ENCODE measurements at regions of chr1 and their contacts with region 1.

Region 1: GRCh38 chr1:214439352-214440119 is 111.9 kb downstream of the PTPN14 start:
- DNase-seq: peak; percentile 58 to 99
- H3K4me3 ChIP-seq: peak overlapping the region; percentile 37; the same call in 1 of the 2 replicates
- H3K27ac ChIP-seq: peak overlapping the region; percentile 80
- H3K4me1 ChIP-seq: peaks cover 38% of the 10 kb centered on the region
- H3K27me3 ChIP-seq: no peaks in the 10 kb centered on the region
- CTCF ChIP-seq: no peak

Region 2: DNA sequence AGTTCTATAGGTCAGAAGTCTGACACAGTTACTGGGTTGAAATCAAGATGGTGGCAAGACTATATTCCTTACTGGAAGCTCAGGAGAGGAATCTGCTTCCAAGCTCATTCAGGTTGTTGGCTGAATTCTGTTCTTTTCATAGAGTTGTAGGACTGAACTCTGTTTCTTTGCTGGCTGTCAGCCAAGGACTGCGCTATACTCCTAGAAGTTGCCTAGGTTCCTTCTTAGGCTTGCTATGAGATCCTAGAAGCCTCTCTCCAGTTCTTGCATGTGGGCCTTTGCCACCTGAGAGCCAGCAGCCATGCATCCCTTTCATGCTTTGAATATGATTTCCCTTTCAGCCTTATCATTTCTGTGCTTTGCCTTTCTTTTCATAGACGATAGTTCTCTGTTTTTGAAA is 1212.1 kb before region 1 on chr1:
- CTCF ChIA-PET with region 1: no interaction called
- POLR2A ChIA-PET with region 1: interaction called, 14 read pairs
- intact Hi-C with region 1: no loop called
- DNase-seq: no peak
- H3K4me3 ChIP-seq: no peak overlapping the region
- H3K27ac ChIP-seq: no peak overlapping the region
- H3K4me1 ChIP-seq: no peaks in the 10 kb centered on the region
- H3K27me3 ChIP-seq: no peaks in the 10 kb centered on the region
- CTCF ChIP-seq: no peak

Region 3: GRCh38 chr1:214248311-214249085 is 191.0 kb before region 1 on chr1:
- CTCF ChIA-PET with region 1: no interaction called
- POLR2A ChIA-PET with region 1: no interaction called
- intact Hi-C with region 1: no loop called
- DNase-seq: no peak
- H3K4me3 ChIP-seq: no peak overlapping the region
- H3K27ac ChIP-seq: no peak overlapping the region
- H3K4me1 ChIP-seq: no peaks in the 10 kb centered on the region
- H3K27me3 ChIP-seq: no peaks in the 10 kb centered on the region
- CTCF ChIP-seq: no peak

Region 4: DNA sequence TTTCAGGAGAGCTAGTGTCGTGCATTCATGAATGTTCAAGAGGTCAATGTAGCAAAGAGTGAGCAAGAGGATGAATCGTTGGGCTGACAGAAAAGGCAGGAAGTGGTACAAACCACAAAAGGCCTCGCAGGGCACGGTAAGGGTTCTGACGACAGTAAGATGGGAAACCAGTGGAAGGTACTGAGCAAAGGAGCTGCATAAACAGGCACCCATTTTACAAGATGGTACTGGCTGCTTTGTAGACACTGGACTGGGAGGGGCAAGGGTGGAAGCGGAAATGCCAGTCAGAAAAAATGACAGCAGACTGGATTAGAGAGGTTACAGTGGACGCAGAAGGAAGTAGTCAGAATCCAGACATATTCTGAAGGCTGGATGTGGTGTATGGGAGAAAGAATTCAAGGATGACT is 11.7 kb before region 1 on chr1:
- CTCF ChIA-PET with region 1: no interaction called
- POLR2A ChIA-PET with region 1: no interaction called
- intact Hi-C with region 1: loop called (anchors 1 kb)
- DNase-seq: peak; percentile 40 to 58
- H3K4me3 ChIP-seq: no peak overlapping the region
- H3K27ac ChIP-seq: peak overlapping the region; percentile 13; the same call in 1 of the 2 replicates
- H3K4me1 ChIP-seq: peaks cover 11% of the 10 kb centered on the region
- H3K27me3 ChIP-seq: no peaks in the 10 kb centered on the region
- CTCF ChIP-seq: no peak

Region 5: DNA sequence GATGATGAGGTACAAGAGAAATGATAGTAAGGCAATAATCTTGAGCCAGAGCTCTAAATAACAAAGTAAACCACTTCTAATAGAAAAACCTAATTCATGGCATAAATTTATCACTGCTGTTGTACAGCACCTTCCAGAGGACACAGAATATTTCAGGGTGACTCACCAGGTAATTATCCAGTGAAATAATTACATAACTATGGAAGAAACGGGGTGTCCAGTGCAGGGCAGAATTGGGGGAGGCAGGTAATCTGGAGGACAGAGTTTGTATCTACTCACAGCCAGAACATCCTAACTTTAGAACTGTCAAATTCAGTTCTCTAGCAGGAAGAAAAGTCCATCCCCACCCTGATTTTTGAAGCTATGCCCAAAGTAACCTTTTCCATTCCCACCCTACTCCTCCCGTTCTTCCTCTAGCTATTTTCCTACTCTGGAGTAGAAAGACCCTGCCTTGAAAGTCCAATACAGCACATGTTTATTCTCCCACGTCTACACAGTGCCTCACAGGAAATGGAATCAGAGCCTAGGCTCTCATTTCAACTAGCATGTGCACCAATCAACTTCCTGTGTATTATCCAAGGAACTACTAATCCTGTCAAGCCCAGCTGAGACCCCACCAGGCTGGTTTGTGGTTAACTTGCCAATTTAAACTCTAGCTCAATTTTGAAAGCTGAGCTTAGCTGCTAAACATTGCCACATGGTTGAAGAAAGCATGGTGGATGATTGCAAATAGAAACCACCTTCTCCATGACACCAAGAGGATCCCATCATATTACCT is 15.3 kb after region 1 on chr1:
- CTCF ChIA-PET with region 1: interaction called, 18 read pairs
- POLR2A ChIA-PET with region 1: no interaction called
- intact Hi-C with region 1: no loop called
- DNase-seq: peak; percentile 29 to 77
- H3K4me3 ChIP-seq: no peak overlapping the region
- H3K27ac ChIP-seq: peak overlapping the region; percentile 63
- H3K4me1 ChIP-seq: peaks cover 45% of the 10 kb centered on the region
- H3K27me3 ChIP-seq: no peaks in the 10 kb centered on the region
- CTCF ChIP-seq: no peak

Region 6: DNA sequence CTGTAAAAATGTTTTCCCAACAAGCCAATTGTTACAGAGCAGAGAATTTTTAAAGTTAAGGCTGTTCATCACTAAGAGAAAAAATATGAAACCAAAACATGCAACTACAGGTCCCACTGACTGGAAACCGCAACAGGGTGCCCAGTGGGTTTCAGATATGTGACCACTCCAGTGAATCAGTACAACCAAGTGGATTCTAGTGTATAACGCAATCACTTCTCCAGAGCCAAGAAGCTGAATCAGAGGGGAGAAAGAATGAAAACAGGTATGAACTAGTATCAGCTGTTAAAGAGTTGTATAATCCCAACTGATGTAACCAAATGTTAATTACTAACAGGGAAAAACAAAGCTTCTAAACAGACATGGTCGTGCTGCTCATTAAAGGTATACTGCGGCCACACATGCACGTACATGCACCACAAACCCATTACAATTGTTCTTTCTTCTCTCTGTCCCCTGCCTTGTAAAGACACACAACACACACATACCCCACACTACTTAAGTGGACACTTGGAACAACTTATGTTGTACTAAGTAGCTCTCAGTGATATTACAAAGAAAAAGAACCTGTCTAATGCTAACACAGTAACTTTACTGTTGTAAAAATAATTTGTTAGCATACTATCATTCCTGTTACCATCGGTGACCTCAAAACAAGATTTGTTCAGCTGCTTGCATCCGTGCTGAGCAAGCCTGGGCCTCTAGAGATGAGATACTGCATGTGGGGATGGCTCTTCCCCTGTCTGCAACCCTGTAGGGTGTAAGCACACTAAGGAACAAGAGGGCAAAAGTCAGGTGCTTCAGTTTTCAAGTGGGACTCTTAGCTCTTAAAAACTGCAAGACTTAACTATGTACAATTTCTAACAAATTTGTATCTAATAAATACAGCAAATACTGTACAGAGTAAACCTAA is 37.7 kb after region 1 on chr1:
- CTCF ChIA-PET with region 1: no interaction called
- POLR2A ChIA-PET with region 1: interaction called, 11 read pairs
- intact Hi-C with region 1: loop called (anchors 5 kb)
- DNase-seq: peak in 1 of 2 experiments; percentile 39
- H3K4me3 ChIP-seq: no peak overlapping the region
- H3K27ac ChIP-seq: no peak overlapping the region
- H3K4me1 ChIP-seq: peaks cover 35% of the 10 kb centered on the region
- H3K27me3 ChIP-seq: no peaks in the 10 kb centered on the region
- CTCF ChIP-seq: no peak

Region 7: DNA sequence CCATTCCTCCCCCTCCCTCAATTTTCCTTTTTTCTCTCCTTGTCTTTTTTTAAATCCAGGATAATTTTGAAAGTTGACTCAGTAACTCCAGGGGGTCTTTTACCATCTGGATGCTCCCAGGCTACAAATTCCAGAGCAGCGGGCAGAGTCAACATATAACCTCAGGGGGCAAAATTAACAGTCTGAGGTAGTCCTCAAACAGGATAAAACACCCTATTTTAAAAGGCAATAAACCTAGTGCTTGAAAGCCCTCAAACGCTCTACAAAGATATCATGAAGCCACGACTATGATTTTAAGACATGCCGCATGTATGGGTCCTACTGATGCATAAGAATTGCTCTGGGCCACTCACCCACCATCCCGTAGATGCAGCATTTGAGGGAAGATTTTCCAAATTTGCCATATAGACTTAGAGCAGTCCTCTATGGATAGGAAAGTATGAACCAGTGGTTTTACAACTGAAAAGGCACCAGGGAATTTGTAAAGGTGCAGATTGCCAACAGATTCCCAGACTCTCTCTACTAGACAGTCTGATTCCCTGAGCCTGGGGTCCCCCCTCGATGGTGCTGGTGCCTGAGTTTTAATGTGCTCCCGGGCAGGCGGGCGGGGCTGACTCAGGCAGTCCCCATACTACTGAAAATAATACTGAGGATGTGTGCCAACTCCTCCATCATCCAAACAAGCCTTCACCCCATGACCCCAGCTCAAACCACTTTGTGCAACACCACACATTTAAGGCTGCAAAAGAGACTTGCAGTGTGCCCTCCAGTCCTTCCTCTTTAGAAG is 74.7 kb after region 1 on chr1:
- CTCF ChIA-PET with region 1: no interaction called
- POLR2A ChIA-PET with region 1: no interaction called
- intact Hi-C with region 1: loop called (anchors 1 kb)
- DNase-seq: no peak
- H3K4me3 ChIP-seq: no peak overlapping the region
- H3K27ac ChIP-seq: no peak overlapping the region
- H3K4me1 ChIP-seq: peaks cover 55% of the 10 kb centered on the region
- H3K27me3 ChIP-seq: no peaks in the 10 kb centered on the region
- CTCF ChIP-seq: no peak

Region 8: GRCh38 chr1:215256936-215257679 is 817.6 kb after region 1 on chr1:
- CTCF ChIA-PET with region 1: no interaction called
- POLR2A ChIA-PET with region 1: no interaction called
- intact Hi-C with region 1: no loop called
- DNase-seq: no peak
- H3K4me3 ChIP-seq: no peak overlapping the region
- H3K27ac ChIP-seq: no peak overlapping the region
- H3K4me1 ChIP-seq: no peaks in the 10 kb centered on the region
- H3K27me3 ChIP-seq: no peaks in the 10 kb centered on the region
- CTCF ChIP-seq: no peak

Region 9: DNA sequence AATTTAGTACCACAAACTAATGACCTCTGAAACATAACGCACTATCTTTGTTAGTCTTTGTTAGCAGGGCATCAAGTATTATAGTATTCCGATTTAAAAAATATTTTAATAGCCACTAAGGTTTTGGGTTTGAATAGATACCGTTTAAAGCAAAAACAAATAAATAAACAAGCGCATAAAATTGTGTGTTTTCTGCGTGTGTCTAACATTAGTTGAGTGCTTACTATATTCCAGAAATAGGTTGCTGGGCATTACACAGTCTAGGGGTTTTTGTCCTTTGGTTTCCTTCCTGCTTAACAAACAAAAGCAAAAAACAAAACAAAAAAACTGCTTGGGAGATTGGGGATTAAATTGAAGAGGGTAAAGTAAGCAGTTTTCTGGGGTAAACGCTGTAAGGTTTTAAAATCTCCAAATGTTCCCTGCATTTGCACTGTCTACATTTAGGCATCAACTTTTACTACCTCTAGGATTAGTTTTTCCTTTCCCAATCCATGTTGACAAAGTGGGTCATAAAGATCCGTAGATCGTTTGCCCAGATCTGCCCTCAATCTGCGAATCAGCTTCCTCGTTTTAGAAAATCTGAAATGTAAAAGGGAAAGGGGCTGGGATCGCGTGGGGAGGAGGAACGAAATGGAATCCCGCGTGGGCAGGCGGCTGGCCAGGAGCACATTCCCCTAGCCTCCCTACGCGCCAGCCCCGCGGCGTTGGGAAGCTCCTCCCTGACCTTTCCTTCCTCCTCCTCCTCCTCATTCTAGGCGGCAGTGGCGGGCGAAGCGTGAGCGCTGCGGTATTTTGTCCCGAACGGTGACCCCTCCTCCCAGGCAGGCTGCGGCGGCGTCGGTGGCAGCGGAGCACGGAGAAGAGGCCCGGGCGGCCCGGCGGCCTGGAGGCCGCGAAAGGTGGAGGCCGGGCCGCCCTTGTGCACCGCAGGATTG is 1127.3 kb after region 1 on chr1 and contains the start of gene KCTD3:
- CTCF ChIA-PET with region 1: no interaction called
- POLR2A ChIA-PET with region 1: no interaction called
- intact Hi-C with region 1: loop called (anchors 10 kb)
- DNase-seq: peak; percentile 57 to 77
- H3K4me3 ChIP-seq: peak within 1 kb of the TSS; percentile 68
- H3K27ac ChIP-seq: peak within 1 kb of the TSS; percentile 75
- H3K4me1 ChIP-seq: peaks cover 37% of the 10 kb centered on the region
- H3K27me3 ChIP-seq: no peaks in the 10 kb centered on the region
- CTCF ChIP-seq: no peak
- total RNA-seq, gene KCTD3: 46.4 and 53.6 TPM in 2 replicates

Measured in PC-9 (cell line).